CD8-positive, alpha-beta T cell (primary cell): ENCODE measurements at regions of chr16 and their contacts with region 1.

Region 1: GRCh38 chr16:29007730-29008593 is 23.1 kb downstream of the LAT start:
- DNase-seq: peak in 8 of 9 experiments; percentile 57 to 83 (median 73)
- ATAC-seq: peak; percentile 75
- H3K4me3 ChIP-seq: no peak overlapping the region
- H3K4me3 Mint-ChIP-seq: peak overlapping the region; percentile 55
- H3K27ac ChIP-seq: peak overlapping the region; percentile 4 to 14
- H3K27ac Mint-ChIP-seq: peak overlapping the region; percentile 99
- H3K4me1 ChIP-seq: peaks cover 53% of the 10 kb centered on the region
- H3K4me1 Mint-ChIP-seq: peaks cover 52% of the 10 kb centered on the region
- H3K27me3 ChIP-seq: no peaks in the 10 kb centered on the region
- H3K27me3 Mint-ChIP-seq: no peaks in the 10 kb centered on the region
- CTCF ChIP-seq: no peak

Region 2: GRCh38 chr16:28935924-28936783 is 71.8 kb before region 1 on chr16:
- CTCF ChIA-PET with region 1: no interaction called
- POLR2A ChIA-PET with region 1: no interaction called
- intact Hi-C with region 1: no loop called
- DNase-seq: peak; percentile 61 to 89 (median 80)
- ATAC-seq: peak; percentile 100
- H3K4me3 ChIP-seq: peak overlapping the region; percentile 25 to 41
- H3K4me3 Mint-ChIP-seq: peak overlapping the region; percentile 76
- H3K27ac ChIP-seq: no peak overlapping the region
- H3K27ac Mint-ChIP-seq: no peak overlapping the region
- H3K4me1 ChIP-seq: peaks cover 19% of the 10 kb centered on the region
- H3K4me1 Mint-ChIP-seq: peaks cover 15% of the 10 kb centered on the region
- H3K27me3 ChIP-seq: no peaks in the 10 kb centered on the region
- H3K27me3 Mint-ChIP-seq: no peaks in the 10 kb centered on the region
- CTCF ChIP-seq: no peak

Region 3: GRCh38 chr16:28974437-28975157 is 33.4 kb before region 1 on chr16 and contains the start of gene SPNS1:
- CTCF ChIA-PET with region 1: interaction called, 5 read pairs
- POLR2A ChIA-PET with region 1: interaction called, 7 read pairs
- intact Hi-C with region 1: loop called in 1 of 2 experiments (anchors 5 kb)
- DNase-seq: peak; percentile 78 to 95 (median 90)
- ATAC-seq: peak; percentile 87
- H3K4me3 ChIP-seq: peak within 1 kb of the TSS; percentile 68 to 96
- H3K4me3 Mint-ChIP-seq: peak within 1 kb of the TSS; percentile 98
- H3K27ac ChIP-seq: peak within 1 kb of the TSS; percentile 55 to 79
- H3K27ac Mint-ChIP-seq: peak within 1 kb of the TSS; percentile 97
- H3K4me1 ChIP-seq: peaks cover 19% of the 10 kb centered on the region
- H3K4me1 Mint-ChIP-seq: peaks cover 41% of the 10 kb centered on the region
- H3K27me3 ChIP-seq: no peaks in the 10 kb centered on the region
- H3K27me3 Mint-ChIP-seq: no peaks in the 10 kb centered on the region
- CTCF ChIP-seq: no peak
- total RNA-seq, gene SPNS1: 31.7 to 31.8 TPM

Region 4: GRCh38 chr16:28990375-28991040 is 17.5 kb before region 1 on chr16:
- CTCF ChIA-PET with region 1: interaction called, 7 read pairs
- POLR2A ChIA-PET with region 1: interaction called, 52 read pairs
- intact Hi-C with region 1: loop called (anchors 1 kb)
- DNase-seq: peak in 7 of 9 experiments; percentile 45 to 74 (median 68)
- ATAC-seq: peak; percentile 55
- H3K4me3 ChIP-seq: peak overlapping the region in 1 of 2 experiments; percentile 26
- H3K4me3 Mint-ChIP-seq: peak overlapping the region; percentile 99
- H3K27ac ChIP-seq: peak overlapping the region; percentile 50 to 71
- H3K27ac Mint-ChIP-seq: peak overlapping the region; percentile 95
- H3K4me1 ChIP-seq: peaks cover 49% of the 10 kb centered on the region
- H3K4me1 Mint-ChIP-seq: peaks cover 51% of the 10 kb centered on the region
- H3K27me3 ChIP-seq: no peaks in the 10 kb centered on the region
- H3K27me3 Mint-ChIP-seq: no peaks in the 10 kb centered on the region
- CTCF ChIP-seq: no peak

Region 5: GRCh38 chr16:29023279-29024277 is 15.6 kb after region 1 on chr16:
- CTCF ChIA-PET with region 1: interaction called, 10 read pairs
- POLR2A ChIA-PET with region 1: interaction called, 8 read pairs
- intact Hi-C with region 1: loop called (anchors 2 kb)
- DNase-seq: peak in 6 of 9 experiments; percentile 30 to 67 (median 44)
- ATAC-seq: peak; percentile 47
- H3K4me3 ChIP-seq: peak overlapping the region in 1 of 2 experiments; percentile 22
- H3K4me3 Mint-ChIP-seq: peak overlapping the region; percentile 64
- H3K27ac ChIP-seq: peak overlapping the region; percentile 13 to 60
- H3K27ac Mint-ChIP-seq: peak overlapping the region; percentile 91
- H3K4me1 ChIP-seq: peaks cover 60% of the 10 kb centered on the region
- H3K4me1 Mint-ChIP-seq: peaks cover 70% of the 10 kb centered on the region
- H3K27me3 ChIP-seq: no peaks in the 10 kb centered on the region
- H3K27me3 Mint-ChIP-seq: no peaks in the 10 kb centered on the region
- CTCF ChIP-seq: no peak

Region 6: GRCh38 chr16:29029168-29029994 is 21.4 kb after region 1 on chr16:
- CTCF ChIA-PET with region 1: interaction called, 5 read pairs
- POLR2A ChIA-PET with region 1: interaction called, 5 read pairs
- intact Hi-C with region 1: loop called (anchors 1 to 2 kb)
- DNase-seq: peak in 8 of 9 experiments; percentile 58 to 88 (median 78)
- ATAC-seq: peak; percentile 98
- H3K4me3 ChIP-seq: peak overlapping the region in 1 of 2 experiments; percentile 35
- H3K4me3 Mint-ChIP-seq: no peak overlapping the region
- H3K27ac ChIP-seq: no peak overlapping the region
- H3K27ac Mint-ChIP-seq: peak overlapping the region; percentile 66
- H3K4me1 ChIP-seq: peaks cover 33% of the 10 kb centered on the region
- H3K4me1 Mint-ChIP-seq: peaks cover 44% of the 10 kb centered on the region
- H3K27me3 ChIP-seq: no peaks in the 10 kb centered on the region
- H3K27me3 Mint-ChIP-seq: no peaks in the 10 kb centered on the region
- CTCF ChIP-seq: no peak

Region 7: GRCh38 chr16:29254676-29255495 is 246.9 kb after region 1 on chr16:
- CTCF ChIA-PET with region 1: no interaction called
- POLR2A ChIA-PET with region 1: no interaction called
- intact Hi-C with region 1: no loop called
- DNase-seq: no peak
- ATAC-seq: no peak
- H3K4me3 ChIP-seq: no peak overlapping the region
- H3K4me3 Mint-ChIP-seq: no peak overlapping the region
- H3K27ac ChIP-seq: no peak overlapping the region
- H3K27ac Mint-ChIP-seq: no peak overlapping the region
- H3K4me1 ChIP-seq: peaks cover 3% of the 10 kb centered on the region
- H3K4me1 Mint-ChIP-seq: peaks cover 10% of the 10 kb centered on the region
- H3K27me3 ChIP-seq: no peaks in the 10 kb centered on the region
- H3K27me3 Mint-ChIP-seq: no peaks in the 10 kb centered on the region
- CTCF ChIP-seq: no peak